Endothelial cell of umbilical vein (primary cell): ENCODE measurements at regions of chr4 and their contacts with region 1.

Region 1: GRCh38 chr4:88284439-88285234 is at the start of gene PPM1K:
- DNase-seq: peak; percentile 99
- H3K4me3 ChIP-seq: peak within 1 kb of the TSS; percentile 71 to 88 (median 82)
- H3K27ac ChIP-seq: peak within 1 kb of the TSS; percentile 82
- H3K4me1 ChIP-seq: peaks cover 13% of the 10 kb centered on the region
- H3K27me3 ChIP-seq: no peaks in the 10 kb centered on the region
- CTCF ChIP-seq: peak in 1 of 2 donors; percentile 9
- POLR2A ChIP-seq: no peak
- total RNA-seq, gene PPM1K: 8.6 and 10.4 TPM in 2 replicates

Region 2: GRCh38 chr4:87865960-87866598 is 418.6 kb before region 1 on chr4:
- CTCF ChIA-PET with region 1: no interaction called
- POLR2A ChIA-PET with region 1: no interaction called
- dilution Hi-C with region 1: no loop called
- intact Hi-C with region 1: no loop called
- DNase-seq: no peak
- H3K4me3 ChIP-seq: no peak overlapping the region
- H3K27ac ChIP-seq: no peak overlapping the region
- H3K4me1 ChIP-seq: no peaks in the 10 kb centered on the region
- H3K27me3 ChIP-seq: no peaks in the 10 kb centered on the region
- CTCF ChIP-seq: no peak
- POLR2A ChIP-seq: no peak

Region 3: GRCh38 chr4:88104902-88105610 is 179.6 kb before region 1 on chr4:
- CTCF ChIA-PET with region 1: no interaction called
- POLR2A ChIA-PET with region 1: no interaction called
- dilution Hi-C with region 1: no loop called
- intact Hi-C with region 1: loop called (anchors 5 kb)
- DNase-seq: peak; percentile 87
- H3K4me3 ChIP-seq: peak overlapping the region in 1 of 3 experiments; percentile 27
- H3K27ac ChIP-seq: peak overlapping the region; percentile 93
- H3K4me1 ChIP-seq: peaks cover 37% of the 10 kb centered on the region
- H3K27me3 ChIP-seq: no peaks in the 10 kb centered on the region
- CTCF ChIP-seq: no peak
- POLR2A ChIP-seq: no peak

Region 4: DNA sequence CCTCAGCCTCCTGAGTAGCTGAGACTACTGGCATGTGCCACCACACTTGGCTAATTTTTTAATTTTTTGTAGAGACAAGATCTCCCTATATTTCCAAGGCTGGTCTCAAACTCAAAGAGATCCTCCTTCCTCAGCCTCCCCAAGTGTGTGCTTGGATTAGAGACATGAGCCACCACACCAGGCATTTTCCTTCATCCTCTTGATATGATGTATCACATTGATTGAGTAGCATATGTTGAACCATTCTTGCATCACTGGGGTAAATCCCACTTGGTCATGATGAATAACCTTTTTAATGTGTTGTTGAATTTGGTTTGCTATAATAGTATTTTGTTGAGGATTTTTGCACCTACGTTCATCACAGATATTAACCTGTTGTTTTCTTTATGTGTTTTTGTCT is 23.9 kb after region 1 on chr4:
- CTCF ChIA-PET with region 1: no interaction called
- POLR2A ChIA-PET with region 1: no interaction called
- dilution Hi-C with region 1: no loop called
- intact Hi-C with region 1: no loop called
- DNase-seq: no peak
- H3K4me3 ChIP-seq: no peak overlapping the region
- H3K27ac ChIP-seq: no peak overlapping the region
- H3K4me1 ChIP-seq: no peaks in the 10 kb centered on the region
- H3K27me3 ChIP-seq: peaks cover 3 to 15% of the 10 kb centered on the region in 2 experiments
- CTCF ChIP-seq: no peak
- POLR2A ChIP-seq: no peak

Region 5: GRCh38 chr4:88341227-88342192 is 56.9 kb after region 1 on chr4:
- CTCF ChIA-PET with region 1: interaction called, 10 read pairs
- POLR2A ChIA-PET with region 1: no interaction called
- dilution Hi-C with region 1: no loop called
- intact Hi-C with region 1: loop called (anchors 1 kb)
- DNase-seq: peak; percentile 91
- H3K4me3 ChIP-seq: no peak overlapping the region
- H3K27ac ChIP-seq: peak overlapping the region; percentile 90
- H3K4me1 ChIP-seq: peaks cover 14% of the 10 kb centered on the region
- H3K27me3 ChIP-seq: no peaks in the 10 kb centered on the region
- CTCF ChIP-seq: no peak
- POLR2A ChIP-seq: no peak

Region 6: DNA sequence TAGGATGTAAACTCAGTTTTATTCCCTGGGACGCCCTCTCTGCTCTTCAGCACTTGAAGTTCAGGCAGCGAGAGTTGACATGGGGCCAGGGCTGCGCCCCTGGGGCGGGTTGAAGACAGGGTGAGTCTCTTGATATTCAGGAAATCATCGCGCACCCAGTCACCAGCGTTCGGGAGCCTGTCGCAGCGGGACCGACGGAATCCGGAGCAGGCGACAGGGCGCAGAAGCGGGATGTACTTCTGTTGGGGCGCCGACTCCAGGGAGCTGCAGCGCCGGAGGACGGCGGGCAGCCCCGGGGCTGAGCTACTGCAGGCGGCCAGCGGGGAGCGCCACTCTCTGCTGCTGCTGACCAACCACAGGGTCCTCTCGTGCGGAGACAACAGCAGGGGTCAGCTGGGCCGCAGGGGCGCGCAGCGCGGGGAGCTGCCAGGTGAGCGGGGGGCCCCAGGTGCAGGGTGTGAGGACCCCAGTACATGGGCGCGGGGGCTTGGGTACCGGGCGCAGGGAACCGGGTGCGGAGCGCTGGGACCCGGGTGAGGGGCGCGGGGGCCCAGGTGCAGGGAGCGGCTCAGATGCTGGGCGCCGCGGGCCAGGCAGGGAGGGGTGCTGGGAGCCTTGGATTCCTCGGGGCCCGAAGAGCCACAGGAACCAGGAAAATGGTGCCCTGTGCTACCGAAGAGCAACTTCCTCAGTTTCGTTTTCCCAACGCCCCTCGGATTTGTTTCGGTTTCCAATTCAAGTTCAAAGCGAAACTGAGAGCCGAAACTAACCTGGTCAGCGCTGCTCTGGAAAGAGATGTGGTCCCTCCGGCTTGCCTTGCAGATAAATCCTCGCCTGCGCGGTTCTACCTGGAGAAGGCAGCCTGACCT is 94.3 kb after region 1 on chr4 and contains the start of gene HERC6:
- CTCF ChIA-PET with region 1: interaction called, 7 read pairs
- POLR2A ChIA-PET with region 1: no interaction called
- dilution Hi-C with region 1: no loop called
- intact Hi-C with region 1: loop called (anchors 2 kb)
- DNase-seq: peak; percentile 81
- H3K4me3 ChIP-seq: peak within 1 kb of the TSS; percentile 76 to 91 (median 89)
- H3K27ac ChIP-seq: peak within 1 kb of the TSS; percentile 61
- H3K4me1 ChIP-seq: peaks cover 3% of the 10 kb centered on the region
- H3K27me3 ChIP-seq: peaks cover 0 to 3% of the 10 kb centered on the region in 2 experiments
- CTCF ChIP-seq: peak; percentile 72 to 91
- POLR2A ChIP-seq: no peak
- total RNA-seq, gene HERC6: 4.1 and 5.0 TPM in 2 replicates

Region 7: DNA sequence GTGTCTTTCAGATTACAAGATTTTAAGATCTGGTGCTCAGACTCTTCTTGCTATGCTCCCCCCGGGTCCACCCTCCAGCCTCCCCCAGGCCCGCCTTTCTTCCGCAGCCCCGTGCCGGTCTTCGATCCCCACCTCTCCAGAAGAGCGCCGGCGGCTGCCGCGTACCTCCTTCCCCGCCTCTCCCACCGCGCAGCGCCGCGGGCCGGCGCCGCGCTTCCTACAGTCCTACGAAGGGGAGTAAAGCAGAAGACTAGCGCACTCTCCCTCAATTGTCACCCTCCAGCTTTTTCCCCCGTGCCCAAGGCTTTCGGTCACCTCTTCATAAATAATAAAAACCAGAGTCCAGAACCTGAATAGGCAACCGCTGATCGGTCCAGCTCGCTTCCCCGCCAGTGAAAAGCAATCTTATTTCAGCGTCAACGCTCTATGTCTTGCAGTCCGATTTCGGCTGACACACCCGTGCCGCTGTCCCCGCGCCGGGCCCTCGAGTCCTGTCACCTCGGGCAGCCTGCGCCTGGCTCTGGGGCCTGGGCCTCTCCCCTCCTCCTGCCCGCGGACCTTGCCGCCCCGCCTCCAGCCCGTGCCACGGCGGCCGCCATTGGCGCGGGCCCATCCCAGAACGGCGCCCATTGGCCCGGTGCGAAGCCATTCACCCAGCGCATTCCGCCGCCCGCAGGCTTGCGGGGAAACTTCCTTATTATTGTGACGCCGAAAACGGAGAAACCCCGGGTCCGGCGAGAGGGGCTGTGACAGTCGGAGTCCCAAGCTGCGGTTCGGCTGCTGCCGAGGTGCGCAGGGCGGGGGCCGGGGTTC is 307.4 kb after region 1 on chr4 and contains the start of gene HERC3:
- CTCF ChIA-PET with region 1: no interaction called
- POLR2A ChIA-PET with region 1: no interaction called
- dilution Hi-C with region 1: no loop called
- intact Hi-C with region 1: loop called (anchors 10 kb)
- DNase-seq: peak; percentile 93
- H3K4me3 ChIP-seq: peak within 1 kb of the TSS; percentile 60 to 81 (median 80)
- H3K27ac ChIP-seq: peak within 1 kb of the TSS; percentile 56
- H3K4me1 ChIP-seq: peaks cover 9% of the 10 kb centered on the region
- H3K27me3 ChIP-seq: no peaks in the 10 kb centered on the region
- CTCF ChIP-seq: peak in 1 of 2 donors; percentile 12
- POLR2A ChIP-seq: no peak
- total RNA-seq, gene HERC3: 21.2 and 25.6 TPM in 2 replicates